Posterior cingulate gyrus (tissue), 11 donors: ENCODE measurements at regions of chr11 and their contacts with region 1.

Region 1: DNA sequence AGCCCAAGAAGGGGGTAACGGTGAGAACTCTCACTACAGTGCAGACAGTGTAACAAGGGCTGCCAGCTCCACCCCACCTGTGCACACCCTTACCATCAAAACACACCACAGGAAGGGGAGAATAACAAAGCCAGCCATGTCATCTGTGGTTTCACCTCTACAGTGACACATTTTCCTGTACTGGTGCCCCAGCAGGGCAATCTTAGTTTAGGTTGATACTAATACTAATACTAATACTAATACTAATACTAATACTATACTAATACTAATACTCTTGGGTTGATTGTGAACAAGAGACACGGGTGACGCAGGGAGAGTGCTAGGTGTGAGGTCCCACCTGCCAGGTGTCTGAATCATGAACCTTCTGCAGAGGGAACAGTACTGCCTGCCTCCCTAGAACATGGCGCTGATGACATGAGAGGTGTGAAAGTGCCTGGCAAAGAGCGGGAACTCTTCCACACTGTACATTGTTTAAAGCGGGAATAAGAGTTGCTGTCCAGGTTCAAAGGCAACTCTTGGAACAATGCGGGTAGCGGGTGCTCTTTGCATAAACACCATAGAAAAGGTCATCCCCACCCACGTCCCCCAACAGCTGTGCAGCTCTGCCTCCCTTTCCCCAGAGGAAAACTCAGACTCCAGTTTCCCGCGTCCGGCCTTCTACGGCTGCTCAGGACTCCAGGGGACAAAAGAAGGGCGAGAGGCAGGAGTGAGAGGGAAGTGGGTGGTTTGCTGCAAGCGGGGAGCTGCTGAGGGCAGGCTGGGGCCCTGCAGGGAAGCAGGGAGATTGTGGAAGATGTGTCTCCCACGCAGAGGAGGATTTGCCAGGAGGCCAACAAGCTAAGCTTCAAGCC is 25.0 kb upstream of the TMPRSS4 start:
- DNase-seq: no peak

Region 2: GRCh38 chr11:117535261-117535781 is 516.5 kb before region 1 on chr11:
- intact Hi-C with region 1: no loop called
- DNase-seq: peak; percentile 64 to 96 (median 78)

Region 3: DNA sequence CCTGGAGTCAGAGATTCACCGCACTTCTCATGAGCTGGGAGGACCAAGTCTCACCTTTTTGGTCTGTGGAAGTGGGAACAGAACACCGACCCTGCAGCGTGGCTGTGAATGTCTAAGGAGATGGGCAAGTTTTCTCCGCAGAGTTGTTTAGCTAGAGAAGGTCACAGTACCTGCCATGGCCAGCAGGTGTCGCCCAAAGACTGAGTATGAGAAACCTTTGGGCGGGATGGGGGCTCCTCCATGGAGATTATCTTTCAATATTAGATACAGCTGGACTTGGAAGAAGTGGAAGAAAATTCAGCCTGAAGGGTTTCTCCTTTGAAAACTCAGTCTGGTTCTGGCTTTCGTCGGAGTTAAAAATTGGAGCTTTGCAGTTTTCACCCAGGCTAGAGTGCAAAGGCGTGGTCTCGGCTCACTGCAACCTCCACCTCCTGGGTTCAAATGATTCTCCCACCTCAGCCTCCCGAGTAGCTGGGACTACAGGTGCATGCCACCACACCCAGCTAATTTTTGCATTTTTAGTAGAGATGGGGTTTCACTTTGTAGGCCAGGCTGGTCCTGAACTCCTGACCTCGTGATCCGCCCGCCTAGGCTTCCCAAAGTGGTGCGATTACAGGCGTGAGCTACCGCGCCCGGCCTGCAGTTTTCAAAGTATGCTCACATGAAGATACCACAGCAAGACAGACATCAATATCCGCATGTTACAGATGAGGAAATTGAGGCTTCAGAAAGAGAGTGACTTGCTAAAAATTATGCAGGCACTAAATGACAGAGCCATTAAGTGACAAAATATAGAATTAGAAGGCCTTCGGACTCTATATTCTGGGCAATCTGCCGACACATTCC is 244.1 kb before region 1 on chr11:
- intact Hi-C with region 1: loop called (anchors 1 kb)
- DNase-seq: peak; percentile 63 to 96 (median 86)

Region 4: DNA sequence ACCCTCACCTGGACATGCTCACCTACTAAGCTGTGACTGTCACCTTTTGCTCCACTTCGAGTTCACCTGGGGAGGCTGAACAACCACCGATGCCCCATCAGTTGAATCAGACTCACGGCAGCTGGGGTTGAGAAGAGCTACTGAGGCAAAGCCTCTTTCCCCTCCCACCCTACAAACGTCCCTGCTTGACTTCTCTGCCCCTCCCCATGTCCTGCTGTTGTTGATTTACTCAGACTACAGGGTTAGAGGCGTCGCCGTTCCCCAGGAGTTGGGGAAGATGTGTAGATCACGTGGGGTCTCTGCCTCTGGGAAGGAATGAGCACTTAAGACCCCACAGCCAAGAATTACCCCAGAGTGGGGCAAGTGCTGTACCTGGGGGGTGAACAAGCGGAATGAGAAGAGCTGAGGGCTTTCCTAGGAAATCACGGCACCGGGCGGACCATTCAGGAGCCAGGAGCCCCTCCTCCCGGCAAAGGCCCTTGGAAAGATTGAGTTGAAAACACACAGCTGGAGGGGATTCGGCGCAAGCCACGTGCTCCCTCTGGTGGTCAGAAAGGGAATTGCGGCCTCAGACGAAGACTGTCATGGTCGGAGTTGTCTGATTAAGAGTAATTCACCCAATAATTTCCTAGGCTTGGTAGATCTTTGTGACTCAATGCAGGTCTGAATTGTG is 234.3 kb before region 1 on chr11:
- intact Hi-C with region 1: loop called (anchors 1 kb)
- DNase-seq: peak; percentile 81 to 98 (median 92)

Region 5: GRCh38 chr11:117843666-117844484 is 208.0 kb before region 1 on chr11:
- intact Hi-C with region 1: loop called (anchors 2 kb)
- DNase-seq: peak; percentile 69 to 96 (median 87)

Region 6: DNA sequence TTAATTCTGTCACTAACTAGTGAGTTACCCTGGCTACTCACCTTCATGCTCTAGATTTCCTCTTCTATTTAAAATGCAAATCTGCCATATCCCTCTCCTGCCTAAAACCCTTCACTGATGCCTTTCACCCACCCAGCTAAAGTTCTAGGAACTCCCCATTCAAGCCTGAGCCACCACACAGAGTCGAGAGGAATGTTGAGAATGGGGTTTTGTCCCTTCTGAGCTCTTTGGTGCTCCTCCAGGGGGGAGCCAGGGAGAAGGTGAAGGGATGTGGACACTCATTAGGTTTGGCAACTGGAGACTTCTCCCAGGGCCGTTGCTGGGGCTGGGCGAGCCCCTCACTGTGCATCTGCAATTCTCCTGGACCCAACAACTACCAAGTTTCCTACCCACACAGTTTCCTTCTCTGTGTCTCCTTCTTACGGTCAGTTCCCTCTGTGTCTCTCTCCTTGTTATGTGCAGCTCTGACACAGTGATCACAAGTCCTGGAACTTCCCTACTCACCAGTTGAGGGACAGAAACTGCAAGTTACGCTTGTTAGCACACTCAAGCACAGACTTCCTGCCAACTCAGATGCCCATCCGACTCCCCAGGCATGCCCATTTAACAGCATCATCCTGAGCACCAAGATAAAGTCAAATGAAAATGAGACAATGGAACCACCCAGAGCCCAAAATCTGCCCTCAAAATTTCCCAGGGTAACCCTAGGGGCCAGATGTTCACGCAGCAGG is 72.2 kb before region 1 on chr11:
- intact Hi-C with region 1: no loop called
- DNase-seq: no peak

Region 7: DNA sequence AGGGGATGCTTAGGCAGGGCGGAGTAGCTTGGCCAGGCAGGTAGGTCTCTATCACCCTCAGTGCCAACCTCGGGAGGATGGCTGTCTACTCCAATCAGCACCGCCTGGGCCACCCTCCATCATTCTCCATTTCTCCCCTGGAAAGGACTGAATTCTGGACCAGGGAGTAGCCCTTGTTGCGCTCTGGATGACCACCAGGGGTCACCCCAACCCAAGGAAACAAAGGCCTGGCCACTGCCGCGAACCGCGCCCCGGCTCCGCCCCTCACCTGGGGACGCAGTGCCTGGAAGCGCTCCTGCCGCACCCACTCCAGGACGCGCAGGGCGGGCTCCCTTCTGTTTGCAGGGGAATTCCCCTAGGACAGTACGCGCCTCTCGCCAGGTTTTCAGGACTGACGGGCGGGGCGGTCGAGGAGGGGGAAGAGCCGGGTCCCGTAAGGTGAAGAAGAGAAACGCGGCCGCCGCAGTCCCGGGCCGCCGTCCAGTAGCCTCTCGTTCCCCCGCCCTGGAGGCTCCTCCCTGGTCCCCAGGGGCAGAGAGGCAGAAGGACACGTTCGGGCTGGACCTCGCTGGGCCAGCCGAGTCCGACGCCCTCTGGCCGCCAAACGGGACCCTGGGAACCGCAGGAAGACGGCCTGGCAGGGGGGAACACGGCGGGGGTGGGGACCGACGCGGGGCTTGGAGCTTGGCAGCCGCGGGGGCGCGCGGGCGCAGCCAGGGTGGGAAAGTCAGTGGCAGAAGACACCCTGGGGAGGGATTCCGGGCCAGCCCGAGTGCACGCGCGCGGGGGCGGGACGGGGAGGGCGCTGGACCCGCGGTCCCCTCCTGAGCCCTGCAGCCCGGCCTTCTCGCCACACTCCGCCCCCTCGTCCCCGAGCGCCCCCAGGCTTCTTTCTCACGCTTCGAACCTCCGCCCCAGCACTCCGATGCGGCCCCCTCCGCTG is 93.7 kb after region 1 on chr11:
- intact Hi-C with region 1: no loop called
- DNase-seq: peak; percentile 74 to 97 (median 86)